ENCODE measurements at regions of chr5 and their contacts with region 1.

Region 1: DNA sequence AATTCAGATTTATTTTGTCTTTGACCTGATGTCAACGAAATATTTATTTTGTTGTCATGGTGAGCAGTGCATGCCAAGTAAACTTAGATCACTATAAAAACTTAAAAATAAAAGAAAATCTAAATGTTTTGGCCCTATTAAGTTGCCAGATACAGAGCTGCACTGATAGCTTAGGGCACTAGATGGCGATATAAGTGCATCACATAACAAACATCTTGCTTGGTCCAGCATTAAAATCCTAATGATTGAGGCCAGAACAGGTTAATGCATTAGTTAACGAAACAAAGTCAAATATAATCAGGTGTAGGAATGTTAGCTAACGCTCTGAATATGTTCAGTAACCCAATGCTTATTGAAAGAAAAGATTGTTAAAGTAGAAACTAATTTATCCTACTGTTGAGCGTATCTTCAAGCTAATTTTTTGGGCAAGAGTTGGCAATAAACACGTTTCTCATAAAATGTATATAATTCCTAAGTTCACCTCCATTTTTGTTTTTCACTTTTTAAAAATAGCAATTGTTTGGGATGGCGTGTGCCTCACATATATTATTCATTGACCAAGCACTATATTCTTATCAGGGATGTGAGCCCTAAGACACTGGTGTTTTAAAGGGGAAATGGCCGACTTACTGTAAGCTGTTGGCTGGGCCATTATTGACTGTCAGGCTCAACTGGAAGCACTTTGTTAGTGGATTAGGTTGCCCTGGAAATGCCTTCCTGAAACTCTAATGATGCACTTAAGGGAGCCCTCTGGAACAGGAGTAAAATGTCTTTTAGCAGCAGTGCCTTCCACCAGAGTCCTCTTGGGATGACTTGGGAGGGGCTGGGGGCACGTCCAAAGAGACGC is 33.3 kb downstream of the KCTD16 start:
- DNase-seq: peak; percentile 70
- H3K4me3 ChIP-seq: no peak overlapping the region
- H3K27ac ChIP-seq: no peak overlapping the region
- H3K4me1 ChIP-seq: peaks cover 39% of the 10 kb centered on the region
- H3K27me3 ChIP-seq: no peaks in the 10 kb centered on the region
- CTCF ChIP-seq: peak; percentile 88

Region 2: GRCh38 chr5:144390133-144390532 is 186.2 kb after region 1 on chr5:
- CTCF ChIA-PET with region 1: no interaction called
- POLR2A ChIA-PET with region 1: no interaction called
- intact Hi-C with region 1: no loop called
- DNase-seq: peak; percentile 4
- H3K4me3 ChIP-seq: no peak overlapping the region
- H3K27ac ChIP-seq: no peak overlapping the region
- H3K4me1 ChIP-seq: no peaks in the 10 kb centered on the region
- H3K27me3 ChIP-seq: no peaks in the 10 kb centered on the region
- CTCF ChIP-seq: peak; percentile 49

Region 3: GRCh38 chr5:145237843-145238242 is 1033.9 kb after region 1 on chr5:
- CTCF ChIA-PET with region 1: interaction called, 6 read pairs
- POLR2A ChIA-PET with region 1: no interaction called
- intact Hi-C with region 1: loop called (anchors 1 kb)
- DNase-seq: peak; percentile 90
- H3K4me3 ChIP-seq: no peak overlapping the region
- H3K27ac ChIP-seq: no peak overlapping the region
- H3K4me1 ChIP-seq: peaks cover 53% of the 10 kb centered on the region
- H3K27me3 ChIP-seq: no peaks in the 10 kb centered on the region
- CTCF ChIP-seq: peak; percentile 89

Region 4: DNA sequence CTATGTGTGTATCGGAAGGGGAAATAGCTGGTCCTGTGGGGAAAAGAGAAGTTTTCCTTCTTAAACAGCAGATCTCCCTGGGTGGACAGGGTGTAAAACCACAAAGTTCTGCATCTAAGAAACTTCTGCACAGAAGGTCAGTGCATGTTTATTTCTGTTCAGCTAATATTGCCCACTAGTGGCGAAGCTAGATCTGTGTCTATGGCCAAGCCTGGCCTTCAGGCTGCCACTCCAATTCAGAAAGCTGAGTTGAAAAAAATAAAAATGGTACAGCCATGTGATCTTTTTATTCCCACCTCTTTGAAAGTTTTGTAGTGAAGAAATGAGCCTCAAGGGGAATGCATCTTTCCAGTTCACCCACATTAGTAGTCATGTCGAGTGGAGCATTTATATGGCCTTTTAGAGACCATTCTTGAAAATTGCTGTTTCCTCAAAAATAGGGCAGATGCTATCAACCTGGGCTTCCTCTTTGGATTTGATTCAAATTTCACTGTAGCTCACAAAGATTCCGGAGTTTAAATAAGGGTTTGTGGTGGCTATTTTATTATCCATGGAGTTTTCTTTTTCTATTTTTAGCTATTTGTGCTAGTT is 1143.1 kb after region 1 on chr5:
- CTCF ChIA-PET with region 1: interaction called, 4 read pairs
- POLR2A ChIA-PET with region 1: no interaction called
- intact Hi-C with region 1: loop called (anchors 10 kb)
- DNase-seq: peak; percentile 83
- H3K4me3 ChIP-seq: no peak overlapping the region
- H3K27ac ChIP-seq: no peak overlapping the region
- H3K4me1 ChIP-seq: peaks cover 17% of the 10 kb centered on the region
- H3K27me3 ChIP-seq: no peaks in the 10 kb centered on the region
- CTCF ChIP-seq: peak; percentile 79

Region 5: DNA sequence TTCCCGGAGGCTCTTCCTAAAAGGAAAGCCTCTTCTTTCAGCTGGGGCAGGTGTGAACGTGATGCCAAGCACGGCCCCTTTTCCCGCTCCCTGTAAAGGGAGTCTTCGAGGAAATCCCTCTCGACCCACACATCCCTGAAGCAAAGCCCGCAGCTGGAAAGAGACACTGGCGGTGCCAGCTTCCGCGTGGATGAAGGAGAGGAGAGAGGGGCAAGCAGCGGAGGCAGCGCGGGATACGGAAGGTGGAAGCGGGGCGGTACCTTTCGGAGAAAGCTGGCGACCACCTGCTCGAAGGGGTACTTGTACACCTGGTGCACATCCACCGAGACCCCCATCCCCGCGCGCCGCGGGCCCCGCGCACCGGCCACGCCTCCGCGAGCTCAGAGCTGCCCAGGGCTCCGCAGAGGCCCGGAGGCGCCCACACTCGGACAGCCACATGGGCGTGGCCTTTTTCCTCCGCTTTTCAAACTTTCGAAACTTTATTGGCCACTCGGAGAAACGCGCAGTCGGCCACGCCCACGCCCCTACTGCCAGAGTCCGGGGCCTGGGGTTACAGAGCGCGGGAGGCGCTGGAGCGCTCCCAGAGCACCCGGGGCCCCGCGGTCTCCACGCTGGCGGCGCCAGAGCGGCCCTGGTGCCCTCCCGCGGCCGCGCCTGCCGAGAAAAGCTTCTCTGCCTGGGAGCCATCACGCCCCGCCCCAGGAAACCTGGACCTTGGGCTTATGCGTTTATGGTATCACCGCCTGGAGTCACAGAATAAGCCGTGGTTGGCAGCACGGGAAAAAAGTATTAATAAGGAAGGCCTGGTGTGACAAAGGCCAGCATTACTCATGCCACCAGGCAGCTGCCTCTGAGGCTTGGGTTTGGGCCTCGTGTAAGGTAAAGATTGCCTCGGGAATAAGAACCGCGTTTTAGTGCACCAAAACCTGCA is 1631.2 kb after region 1 on chr5 and contains the start of gene PRELID2:
- CTCF ChIA-PET with region 1: no interaction called
- POLR2A ChIA-PET with region 1: no interaction called
- intact Hi-C with region 1: loop called (anchors 5 kb)
- DNase-seq: peak; percentile 96
- H3K4me3 ChIP-seq: peak within 1 kb of the TSS; percentile 66
- H3K27ac ChIP-seq: peak within 1 kb of the TSS; percentile 77
- H3K4me1 ChIP-seq: peaks cover 25% of the 10 kb centered on the region
- H3K27me3 ChIP-seq: no peaks in the 10 kb centered on the region
- CTCF ChIP-seq: no peak
- total RNA-seq, gene PRELID2: 50.2 and 55.8 TPM in 2 replicates

Region 6: GRCh38 chr5:146130440-146131045 is 1926.6 kb after region 1 on chr5:
- CTCF ChIA-PET with region 1: no interaction called
- POLR2A ChIA-PET with region 1: no interaction called
- intact Hi-C with region 1: loop called (anchors 2 kb)
- DNase-seq: peak; percentile 55
- H3K4me3 ChIP-seq: no peak overlapping the region
- H3K27ac ChIP-seq: peak overlapping the region; percentile 57
- H3K4me1 ChIP-seq: peaks cover 13% of the 10 kb centered on the region
- H3K27me3 ChIP-seq: no peaks in the 10 kb centered on the region
- CTCF ChIP-seq: peak; percentile 85